ENCODE measurements at regions of chr2 and their contacts with region 1.

Region 1: GRCh38 chr2:12824351-12824777 is 107.6 kb downstream of the TRIB2 start:
- DNase-seq: no peak
- ATAC-seq: peak in 1 of 2 donors; percentile 7
- H3K4me3 ChIP-seq: no peak overlapping the region
- H3K27ac ChIP-seq: peak overlapping the region; percentile 61 to 83 (median 76)
- H3K4me1 ChIP-seq: peaks cover 7 to 27% of the 10 kb centered on the region in 2 donors
- H3K27me3 ChIP-seq: no peaks in the 10 kb centered on the region
- CTCF ChIP-seq: no peak
- POLR2A ChIP-seq: no peak

Region 2: DNA sequence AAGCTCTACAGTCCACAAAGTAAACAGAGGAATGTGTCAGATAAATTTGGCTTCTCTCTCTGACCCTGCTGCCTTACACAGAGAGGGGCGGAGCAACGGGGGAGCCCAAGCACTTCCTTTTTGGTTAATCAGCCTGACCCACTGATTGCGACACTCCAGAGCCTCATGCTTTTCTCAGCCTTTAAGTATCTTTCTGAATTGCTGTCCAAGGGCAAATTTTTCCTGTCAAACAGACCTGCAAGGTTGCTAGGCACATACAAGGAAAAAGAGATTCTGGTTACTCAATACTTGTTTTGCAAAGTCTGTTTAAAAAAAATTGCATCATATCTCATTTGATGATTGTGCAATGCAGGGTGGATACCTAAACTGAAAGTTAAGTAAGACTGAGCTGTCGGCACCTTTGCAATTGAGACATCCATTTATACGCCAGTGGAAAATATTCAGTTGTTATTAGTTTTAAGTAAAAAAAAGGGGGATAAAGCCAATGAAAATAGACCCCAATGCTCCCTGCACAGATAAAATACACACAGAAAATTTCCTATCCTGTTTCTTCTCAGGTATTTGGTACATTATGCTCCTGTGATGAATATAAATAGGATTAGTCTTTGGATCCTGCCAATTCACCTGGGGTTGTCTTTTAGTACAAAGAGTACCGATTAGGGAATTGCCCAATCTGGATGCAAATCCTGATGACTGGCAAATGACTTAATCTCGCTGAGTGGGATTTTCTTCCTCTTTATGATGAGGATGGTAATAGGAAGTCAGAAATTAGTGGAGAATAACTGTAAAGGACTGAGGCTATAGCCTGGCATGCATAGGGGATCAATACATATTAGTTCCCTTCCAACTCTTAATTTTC is 367.8 kb before region 1 on chr2:
- in situ Hi-C with region 1: no loop called
- intact Hi-C with region 1: loop called (anchors 10 kb)
- DNase-seq: peak; percentile 88 to 92
- ATAC-seq: peak; percentile 85 to 88
- H3K4me3 ChIP-seq: peak overlapping the region; percentile 18 to 26 (median 20)
- H3K27ac ChIP-seq: peak overlapping the region; percentile 60 to 82 (median 66)
- H3K4me1 ChIP-seq: peaks cover 18 to 32% of the 10 kb centered on the region in 2 donors
- H3K27me3 ChIP-seq: no peaks in the 10 kb centered on the region
- CTCF ChIP-seq: peak in 1 of 5 experiments; percentile 17
- POLR2A ChIP-seq: no peak

Region 3: GRCh38 chr2:12750166-12750905 is 74.0 kb before region 1 on chr2:
- in situ Hi-C with region 1: no loop called
- intact Hi-C with region 1: no loop called
- DNase-seq: no peak
- ATAC-seq: no peak
- H3K4me3 ChIP-seq: no peak overlapping the region
- H3K27ac ChIP-seq: no peak overlapping the region
- H3K4me1 ChIP-seq: peaks cover 0 to 8% of the 10 kb centered on the region in 2 donors
- H3K27me3 ChIP-seq: no peaks in the 10 kb centered on the region
- CTCF ChIP-seq: no peak
- POLR2A ChIP-seq: no peak

Region 4: DNA sequence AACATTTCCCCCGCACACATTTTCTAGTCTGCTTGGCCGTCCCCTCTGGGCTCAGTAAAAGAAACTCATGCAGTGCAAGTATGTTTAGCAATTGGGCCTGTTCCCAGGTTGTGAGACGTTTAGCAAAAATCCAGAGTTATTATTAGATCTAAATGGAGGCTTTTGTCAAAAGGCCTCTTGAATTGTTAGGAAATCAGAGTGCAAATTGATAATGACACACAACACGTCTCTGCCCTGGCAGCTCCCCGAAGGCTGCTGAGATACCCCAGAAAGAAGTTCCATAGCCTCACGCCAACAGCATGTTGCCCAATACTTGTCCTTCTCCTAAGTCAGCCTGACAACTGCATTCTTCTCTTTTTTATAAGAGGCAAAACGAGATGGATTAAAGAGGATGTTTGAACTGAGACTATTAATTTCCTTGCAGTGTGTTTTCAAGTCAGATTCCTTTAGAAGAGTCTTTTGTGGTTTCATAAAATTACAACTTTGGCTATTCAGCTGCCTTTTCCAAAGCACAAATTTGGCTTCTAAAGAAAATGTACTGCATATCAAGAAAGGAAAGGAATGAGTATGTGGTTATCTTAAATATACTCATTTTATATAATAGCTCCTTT is 94.6 kb after region 1 on chr2:
- in situ Hi-C with region 1: no loop called
- intact Hi-C with region 1: loop called (anchors 10 kb)
- DNase-seq: peak; percentile 40 to 69
- ATAC-seq: peak; percentile 75 to 81
- H3K4me3 ChIP-seq: peak overlapping the region in 1 of 4 donors; percentile 7
- H3K27ac ChIP-seq: peak overlapping the region; percentile 33 to 65 (median 44)
- H3K4me1 ChIP-seq: peaks cover 0 to 14% of the 10 kb centered on the region in 2 donors
- H3K27me3 ChIP-seq: no peaks in the 10 kb centered on the region
- CTCF ChIP-seq: no peak
- POLR2A ChIP-seq: no peak

Measured in gastrocnemius medialis (tissue), 4 donors.